ENCODE measurements at regions of chr1 and their contacts with region 1.

Region 1: DNA sequence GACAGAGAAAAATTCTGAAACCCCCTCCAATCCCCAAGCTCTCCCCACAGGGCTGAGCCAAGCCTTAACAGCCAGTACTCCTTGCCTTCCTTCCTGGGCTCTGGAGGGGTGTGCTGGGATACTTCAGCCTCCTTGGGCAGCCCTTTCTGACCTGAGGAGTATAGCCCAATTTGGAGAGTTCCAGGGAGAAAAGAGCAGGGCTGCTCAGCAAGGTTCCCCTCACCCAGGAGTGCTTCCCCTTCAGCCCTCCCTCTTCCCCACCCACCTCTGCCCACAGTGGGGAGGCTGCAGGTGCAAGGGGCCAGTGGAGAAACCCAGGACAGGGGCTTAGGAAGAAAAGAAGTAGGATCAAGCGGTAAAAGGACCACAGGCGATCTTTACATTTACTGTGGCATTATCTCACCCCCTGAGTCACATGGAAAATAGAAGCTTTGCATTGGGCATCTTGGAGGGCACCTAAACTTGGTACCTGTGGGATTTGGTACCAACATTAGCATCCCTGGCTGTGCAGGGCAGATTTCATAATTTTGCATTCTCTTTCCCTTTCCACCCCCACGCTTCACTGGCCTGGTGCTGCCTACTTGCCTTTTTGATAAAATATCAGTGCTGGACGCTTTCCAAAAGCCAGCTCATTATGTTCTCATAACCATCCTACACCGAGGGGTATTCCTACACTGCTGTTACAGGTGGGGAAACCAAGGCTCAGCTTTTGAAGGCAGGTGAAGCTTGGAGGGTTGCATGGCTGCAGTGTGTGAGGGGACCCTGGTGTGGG is 2.8 kb upstream of the ADORA1 start:
- DNase-seq: no peak
- ATAC-seq: no peak
- H3K4me3 ChIP-seq: no peak overlapping the region
- H3K27ac ChIP-seq: no peak overlapping the region
- H3K4me1 ChIP-seq: peaks cover 1% of the 10 kb centered on the region
- H3K27me3 ChIP-seq: no peaks in the 10 kb centered on the region

Region 2: DNA sequence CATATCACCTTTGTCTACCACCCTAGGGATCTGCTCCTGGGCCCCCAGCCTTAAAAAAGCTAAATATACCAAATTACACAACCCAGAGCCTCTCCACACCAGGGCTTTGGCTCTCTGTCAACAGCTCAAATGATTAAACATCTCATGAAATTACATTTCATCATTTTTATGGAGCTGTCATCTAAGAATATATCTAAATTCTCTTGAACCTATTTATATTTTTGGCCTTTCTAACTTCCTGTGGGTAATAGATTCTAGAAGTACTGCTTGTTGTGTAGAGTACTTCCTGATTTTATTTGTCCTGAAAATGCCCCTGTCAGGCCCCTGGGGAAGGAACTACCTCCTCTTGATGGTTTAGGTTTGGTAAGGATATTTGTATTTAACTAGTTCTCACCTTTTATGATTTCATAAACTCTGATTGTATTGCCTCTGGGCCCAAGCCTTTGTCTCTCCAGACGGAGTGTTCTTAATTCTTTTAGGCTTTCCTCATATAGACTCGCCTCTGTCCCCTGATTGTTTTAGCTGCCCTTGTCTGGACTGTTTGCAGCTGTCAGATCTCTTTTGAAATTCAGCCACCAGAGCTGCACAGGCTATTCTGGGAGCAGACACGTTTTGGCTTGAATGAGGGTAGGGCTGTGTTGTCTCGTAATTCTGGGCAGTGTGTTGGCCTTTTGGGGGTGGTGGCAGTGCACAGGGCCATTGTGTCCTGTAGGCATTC is 55.5 kb before region 1 on chr1:
- intact Hi-C with region 1: no loop called
- DNase-seq: no peak
- ATAC-seq: peak; percentile 83 to 88
- H3K4me3 ChIP-seq: no peak overlapping the region
- H3K27ac ChIP-seq: peak overlapping the region; percentile 88
- H3K4me1 ChIP-seq: peaks cover 9% of the 10 kb centered on the region
- H3K27me3 ChIP-seq: no peaks in the 10 kb centered on the region

Region 3: DNA sequence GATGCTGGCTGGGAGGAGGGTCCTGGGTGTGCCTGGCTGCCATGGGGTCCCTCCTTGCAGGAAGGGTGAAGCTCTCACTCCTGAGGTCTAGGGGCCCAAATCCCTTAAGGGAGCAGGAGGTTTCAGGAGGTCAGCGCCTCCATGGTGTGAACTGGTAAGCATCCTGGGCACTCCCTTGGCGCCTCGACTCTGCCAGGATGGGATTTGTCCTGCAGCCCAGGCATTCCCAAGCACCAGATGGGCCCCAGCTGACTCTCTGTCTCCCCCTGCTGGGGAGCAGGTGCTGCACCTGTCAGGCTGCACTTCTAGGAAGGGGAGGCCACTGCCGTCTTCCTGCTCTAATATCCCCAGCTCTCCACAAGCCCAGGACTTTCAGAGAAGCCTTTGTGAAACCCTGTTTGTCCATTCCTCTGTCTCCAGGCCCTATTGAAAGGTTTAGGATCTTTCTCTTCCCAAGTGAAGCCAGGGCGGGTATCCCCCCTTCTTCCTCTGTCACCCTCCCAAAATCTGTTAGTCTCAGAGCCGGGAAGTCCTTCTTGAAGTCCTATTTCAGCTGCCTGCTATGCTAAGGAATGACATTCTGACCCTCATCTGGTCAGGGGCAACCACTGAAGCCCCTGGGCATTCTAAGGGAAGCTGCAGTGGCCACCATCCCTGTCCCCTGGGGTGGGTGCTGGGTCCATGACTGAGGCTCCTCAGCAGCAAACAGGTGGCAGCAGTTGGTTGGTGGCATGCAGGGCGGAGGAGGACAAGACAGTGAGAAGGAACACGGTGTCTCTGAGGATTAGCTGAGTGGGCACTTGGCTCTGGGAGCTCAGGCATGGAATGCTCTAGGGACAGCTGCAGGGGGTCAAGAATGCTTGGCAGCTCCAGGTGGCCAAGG is 47.6 kb after region 1 on chr1:
- intact Hi-C with region 1: loop called in 1 of 4 experiments (anchors 5 kb)
- DNase-seq: peak; percentile 44 to 84 (median 72)
- ATAC-seq: peak; percentile 36 to 57
- H3K4me3 ChIP-seq: no peak overlapping the region
- H3K27ac ChIP-seq: no peak overlapping the region
- H3K4me1 ChIP-seq: peaks cover 6% of the 10 kb centered on the region
- H3K27me3 ChIP-seq: no peaks in the 10 kb centered on the region

Region 4: DNA sequence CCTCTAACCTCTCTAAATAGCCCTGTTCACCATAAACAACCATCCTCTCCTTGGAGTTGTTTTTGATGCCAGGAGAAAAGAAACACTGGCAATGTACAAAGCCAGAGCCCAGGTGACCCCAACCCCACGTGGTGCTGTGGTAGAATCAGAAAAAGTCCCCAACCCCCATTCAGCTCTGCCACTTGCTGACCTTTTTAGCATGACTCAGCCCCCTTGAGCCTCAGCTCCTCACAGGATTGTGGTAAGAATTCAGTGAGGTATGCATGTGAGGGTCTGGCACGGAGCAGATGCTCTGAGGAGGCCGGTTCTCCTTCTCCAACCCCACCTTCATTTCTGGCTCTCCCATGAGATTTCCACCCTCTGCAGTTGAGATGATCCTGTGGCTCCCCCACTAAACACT is 72.9 kb after region 1 on chr1:
- intact Hi-C with region 1: no loop called
- DNase-seq: no peak
- ATAC-seq: no peak
- H3K4me3 ChIP-seq: no peak overlapping the region
- H3K27ac ChIP-seq: no peak overlapping the region
- H3K4me1 ChIP-seq: peaks cover 11% of the 10 kb centered on the region
- H3K27me3 ChIP-seq: no peaks in the 10 kb centered on the region

Region 5: GRCh38 chr1:203207751-203208150 is 83.0 kb after region 1 on chr1:
- intact Hi-C with region 1: loop called in 1 of 4 experiments (anchors 2 kb)
- DNase-seq: no peak
- ATAC-seq: no peak
- H3K4me3 ChIP-seq: no peak overlapping the region
- H3K27ac ChIP-seq: no peak overlapping the region
- H3K4me1 ChIP-seq: no peaks in the 10 kb centered on the region
- H3K27me3 ChIP-seq: no peaks in the 10 kb centered on the region

Region 6: GRCh38 chr1:203448521-203449061 is 323.9 kb after region 1 on chr1:
- intact Hi-C with region 1: no loop called
- DNase-seq: peak in 2 of 3 donors; percentile 52 to 80
- ATAC-seq: peak; percentile 67 to 75
- H3K4me3 ChIP-seq: no peak overlapping the region
- H3K27ac ChIP-seq: peak overlapping the region; percentile 80
- H3K4me1 ChIP-seq: no peaks in the 10 kb centered on the region
- H3K27me3 ChIP-seq: no peaks in the 10 kb centered on the region

Measured in right cardiac atrium (tissue), 5 donors.